Activated CD4-positive, alpha-beta T cell treated with anti-CD3 and anti-CD28 coated beads, Interleukin-2, amount 10 ng/mL, durations not matched to agents 24 days and 14 days (primary cell): ENCODE measurements at regions of chr12 and their contacts with region 1.

Region 1: GRCh38 chr12:662566-663292 is 516 bp downstream of the NINJ2 start:
- DNase-seq: no peak
- H3K4me3 Mint-ChIP-seq: peak overlapping the region; percentile 77
- H3K27ac Mint-ChIP-seq: peak overlapping the region; percentile 92
- H3K4me1 Mint-ChIP-seq: peaks cover 46% of the 10 kb centered on the region
- H3K27me3 Mint-ChIP-seq: no peaks in the 10 kb centered on the region

Region 2: DNA sequence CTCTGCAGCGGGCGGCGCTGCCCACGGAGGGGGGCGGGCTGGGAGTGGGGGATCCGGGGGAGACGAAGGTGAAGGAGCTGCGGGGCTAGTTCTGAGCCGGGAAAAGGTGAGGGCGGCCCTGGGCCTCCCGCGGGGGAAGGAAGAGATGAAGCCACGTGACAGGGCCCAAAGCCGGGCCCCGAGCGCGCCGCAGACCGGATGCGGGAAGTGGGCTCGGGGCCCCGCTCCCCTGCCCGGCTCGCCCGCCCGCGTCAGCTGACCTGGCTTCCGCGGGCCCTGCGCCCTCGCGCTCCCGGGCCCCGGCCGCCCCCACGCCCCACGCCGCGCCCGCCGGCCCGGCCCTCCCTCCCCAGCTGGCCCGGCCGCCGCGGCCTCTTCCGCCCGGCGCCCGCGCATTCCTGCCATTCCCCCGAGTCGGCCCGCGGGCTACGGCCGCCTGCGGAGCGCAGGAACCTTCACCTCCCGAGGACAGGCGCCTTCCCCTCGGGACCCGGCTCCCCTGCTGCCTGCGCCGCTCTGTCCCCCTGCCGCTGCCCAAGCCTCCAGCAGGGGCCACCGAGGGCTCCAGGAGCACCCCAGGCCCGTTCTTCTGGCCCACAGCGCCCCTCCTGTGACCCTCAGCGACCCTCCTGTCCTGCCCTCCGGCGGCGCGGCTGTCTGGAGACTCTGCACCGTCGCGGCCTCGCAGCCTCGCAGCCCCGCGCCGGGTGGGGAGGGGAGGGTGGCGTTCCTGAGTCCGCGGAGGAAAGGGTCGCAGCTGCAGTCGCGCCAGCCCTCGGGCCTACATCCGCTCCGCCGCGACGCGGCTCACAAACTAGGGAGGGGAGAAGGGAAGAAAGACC is 19.9 kb before region 1 on chr12:
- intact Hi-C with region 1: loop called (anchors 2 kb)
- DNase-seq: peak; percentile 94
- H3K4me3 Mint-ChIP-seq: peak overlapping the region; percentile 86
- H3K27ac Mint-ChIP-seq: peak overlapping the region; percentile 92
- H3K4me1 Mint-ChIP-seq: peaks cover 57% of the 10 kb centered on the region
- H3K27me3 Mint-ChIP-seq: no peaks in the 10 kb centered on the region

Region 3: GRCh38 chr12:685388-685787 is 22.7 kb after region 1 on chr12:
- intact Hi-C with region 1: loop called (anchors 2 kb)
- DNase-seq: peak; percentile 95
- H3K4me3 Mint-ChIP-seq: peak overlapping the region; percentile 21
- H3K27ac Mint-ChIP-seq: peak overlapping the region; percentile 86
- H3K4me1 Mint-ChIP-seq: peaks cover 24% of the 10 kb centered on the region
- H3K27me3 Mint-ChIP-seq: no peaks in the 10 kb centered on the region

Region 4: DNA sequence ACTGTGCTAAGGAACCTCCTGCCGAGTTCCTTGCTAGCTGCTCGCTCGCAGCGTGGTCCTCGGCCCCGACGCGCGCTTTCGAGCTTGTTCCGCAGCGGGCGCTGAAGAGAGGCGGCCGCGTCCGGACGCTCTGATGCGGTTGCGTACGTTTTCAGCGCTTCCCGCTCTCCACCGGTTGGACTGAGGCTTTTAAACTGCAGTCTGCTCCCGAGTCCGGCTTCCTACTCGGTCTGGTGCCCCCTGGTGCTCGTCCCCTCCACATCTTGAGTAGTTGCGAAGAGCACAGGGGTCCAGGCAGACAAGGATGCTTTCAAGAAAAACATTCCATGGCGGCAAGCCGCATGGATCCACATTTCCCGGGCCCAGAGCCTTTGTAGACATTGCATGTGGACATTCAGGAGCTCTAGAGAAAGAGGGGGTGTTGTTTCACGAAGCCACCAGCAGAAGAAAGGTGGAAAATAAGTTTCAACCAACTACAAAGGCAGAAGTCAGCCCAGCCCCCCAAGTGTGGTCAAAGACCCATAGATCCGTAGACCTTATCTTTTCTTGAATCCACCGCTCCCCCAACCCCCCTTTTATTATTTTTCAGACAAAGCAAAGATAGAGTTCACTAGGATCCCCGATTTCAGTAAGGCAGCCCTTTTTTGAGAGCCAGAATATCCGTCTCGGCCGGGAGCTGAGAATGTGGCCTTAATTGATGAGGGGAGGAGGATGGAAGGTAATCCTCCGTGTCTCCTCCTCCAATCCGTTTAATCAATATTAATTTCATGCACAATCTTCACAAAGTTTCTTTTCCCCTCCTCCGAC is 88.7 kb after region 1 on chr12:
- intact Hi-C with region 1: no loop called
- DNase-seq: peak; percentile 96
- H3K4me3 Mint-ChIP-seq: no peak overlapping the region
- H3K27ac Mint-ChIP-seq: no peak overlapping the region
- H3K4me1 Mint-ChIP-seq: peaks cover 21% of the 10 kb centered on the region
- H3K27me3 Mint-ChIP-seq: no peaks in the 10 kb centered on the region

Region 5: DNA sequence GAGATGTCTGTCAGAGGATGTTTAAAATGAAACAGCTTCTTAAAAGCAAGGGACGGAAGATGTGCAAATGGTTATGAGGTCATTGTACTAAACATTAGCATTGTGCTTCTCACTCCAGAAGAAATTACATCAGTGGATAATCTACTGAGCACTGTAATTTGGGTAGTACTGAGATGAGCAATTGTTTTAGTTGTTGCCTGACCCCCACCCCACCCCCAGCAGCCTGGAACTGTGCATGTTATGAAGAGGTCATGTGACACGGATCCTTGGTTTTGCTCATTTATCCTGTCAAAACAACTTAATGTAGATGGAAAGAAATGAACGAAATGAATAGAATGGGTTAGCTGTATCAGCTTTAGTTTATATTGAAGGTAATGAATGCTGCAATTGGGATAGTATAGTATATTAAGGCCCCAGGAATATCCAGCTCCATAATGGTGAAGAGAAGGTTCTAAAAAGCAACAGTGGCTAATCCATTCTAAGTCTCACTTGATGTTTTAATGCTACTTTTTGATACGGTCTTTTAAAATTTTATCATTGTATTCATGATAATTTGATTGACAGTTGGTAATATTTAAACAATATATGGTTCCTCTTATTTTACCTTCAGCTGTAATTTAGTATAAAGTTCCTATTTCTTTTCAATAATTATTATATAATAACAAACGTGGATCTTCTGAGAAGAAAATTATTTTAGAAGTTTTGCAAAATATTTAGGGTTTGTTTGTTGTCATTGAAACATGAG is 148.1 kb after region 1 on chr12:
- intact Hi-C with region 1: no loop called
- DNase-seq: peak; percentile 74
- H3K4me3 Mint-ChIP-seq: no peak overlapping the region
- H3K27ac Mint-ChIP-seq: peak overlapping the region; percentile 57
- H3K4me1 Mint-ChIP-seq: peaks cover 41% of the 10 kb centered on the region
- H3K27me3 Mint-ChIP-seq: no peaks in the 10 kb centered on the region